Activated naive CD4-positive, alpha-beta T cell treated with anti-CD3 and anti-CD28 coated beads, Interleukin-2, amount 10 ng/mL, durations not matched to agents 7 days and 5 days (primary cell): ENCODE measurements at regions of chr17 and their contacts with region 1.

Region 1: DNA sequence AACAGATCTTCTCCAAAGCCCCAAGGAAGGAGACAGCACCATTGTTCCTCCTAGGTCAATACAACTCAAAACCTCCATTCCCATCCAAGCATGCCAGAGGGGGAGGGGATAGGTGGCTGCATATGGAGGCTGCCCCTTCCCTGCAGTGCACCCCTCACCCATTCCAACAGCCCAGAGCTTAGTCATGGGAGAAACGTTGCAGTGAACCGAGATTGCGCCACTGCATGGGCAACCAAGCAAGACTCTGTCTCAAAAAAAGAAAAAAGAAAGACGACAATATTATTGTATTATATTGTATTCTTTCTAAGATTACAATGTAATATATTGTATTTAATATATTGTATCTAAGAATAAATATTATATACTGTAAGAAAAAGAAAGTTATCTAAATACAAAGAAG is 36.4 kb upstream of the CD300E start:
- DNase-seq: no peak
- H3K4me3 Mint-ChIP-seq: no peak overlapping the region
- H3K27ac Mint-ChIP-seq: no peak overlapping the region
- H3K4me1 Mint-ChIP-seq: peaks cover 6% of the 10 kb centered on the region
- H3K27me3 Mint-ChIP-seq: peaks cover 80% of the 10 kb centered on the region

Region 2: DNA sequence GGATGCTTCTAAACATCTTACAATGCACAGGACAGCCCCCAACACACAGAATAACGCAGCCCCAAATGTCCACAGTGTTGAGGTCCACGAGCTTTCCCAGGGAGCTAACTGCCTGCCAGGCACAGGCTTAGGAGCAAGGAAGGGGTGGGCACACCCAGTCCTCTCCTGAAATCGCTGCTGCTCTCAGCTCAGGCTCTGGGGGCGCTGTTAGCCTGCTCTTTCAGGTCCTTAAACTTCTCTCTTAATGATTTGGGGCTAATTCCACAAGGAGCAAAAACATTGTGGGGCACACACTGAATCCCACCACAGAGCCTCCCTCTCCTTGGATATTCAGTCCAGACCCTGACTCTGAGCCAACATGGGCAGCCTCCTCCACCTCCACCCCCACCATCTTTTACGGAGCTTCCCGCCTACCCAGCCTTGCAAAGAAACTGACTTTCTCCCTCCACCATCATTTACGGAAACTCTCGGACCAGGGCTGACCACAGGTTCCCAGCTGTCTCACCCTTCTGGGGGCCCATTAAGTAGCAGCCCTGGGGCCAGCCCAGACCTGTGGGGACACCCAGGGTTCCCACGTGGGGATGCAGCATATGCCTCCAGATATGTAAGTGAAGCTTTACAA is 93.7 kb before region 1 on chr17:
- CTCF ChIA-PET with region 1: interaction called, 14 read pairs
- DNase-seq: peak; percentile 63
- H3K4me3 Mint-ChIP-seq: no peak overlapping the region
- H3K27ac Mint-ChIP-seq: no peak overlapping the region
- H3K4me1 Mint-ChIP-seq: peaks cover 3% of the 10 kb centered on the region
- H3K27me3 Mint-ChIP-seq: peaks cover 65% of the 10 kb centered on the region

Region 3: GRCh38 chr17:74677558-74678466 is 17.9 kb after region 1 on chr17:
- CTCF ChIA-PET with region 1: interaction called, 20 read pairs
- DNase-seq: peak; percentile 38
- H3K4me3 Mint-ChIP-seq: no peak overlapping the region
- H3K27ac Mint-ChIP-seq: peak overlapping the region; percentile 66
- H3K4me1 Mint-ChIP-seq: peaks cover 23% of the 10 kb centered on the region
- H3K27me3 Mint-ChIP-seq: peaks cover 76% of the 10 kb centered on the region

Region 4: DNA sequence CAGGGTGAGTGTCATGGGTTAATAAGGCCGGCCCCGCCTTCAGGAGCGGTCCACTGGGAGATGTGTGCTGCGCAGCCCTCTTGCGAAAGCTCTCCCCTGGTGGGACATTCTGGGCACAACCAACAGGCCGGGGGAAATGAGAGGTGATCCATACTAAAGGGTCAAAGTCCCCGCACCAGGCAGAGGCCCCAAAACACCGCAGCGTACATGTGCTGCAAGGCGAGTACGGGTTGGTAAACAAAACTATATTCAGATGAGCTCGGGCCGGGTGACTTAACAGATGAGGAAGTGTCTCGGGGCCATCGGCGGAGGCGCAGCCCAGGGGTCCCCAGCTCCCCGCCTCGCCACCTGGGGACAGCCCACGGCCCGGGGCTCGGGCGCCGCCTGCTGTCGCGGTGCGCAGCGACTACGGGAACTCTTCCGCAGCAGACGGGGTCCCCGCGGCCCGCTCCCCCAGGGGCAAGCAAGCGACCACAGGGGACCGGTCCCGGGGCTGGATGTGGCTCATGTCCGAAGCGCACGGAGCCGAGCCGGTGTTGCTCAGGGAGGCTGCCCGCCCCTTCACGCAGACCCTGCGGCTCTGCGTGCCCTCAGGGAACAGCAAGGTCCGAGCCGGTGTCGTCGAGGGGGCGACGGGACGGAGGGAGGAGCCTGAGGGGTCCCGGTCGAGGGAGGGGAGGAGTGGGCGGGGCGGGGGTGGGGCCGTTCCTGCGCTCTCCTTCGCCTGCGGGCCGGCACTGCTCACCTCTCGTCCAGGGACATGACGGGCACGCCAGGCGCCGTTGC is 76.8 kb after region 1 on chr17 and contains the start of gene RAB37:
- CTCF ChIA-PET with region 1: interaction called, 240 read pairs
- DNase-seq: peak; percentile 66
- H3K4me3 Mint-ChIP-seq: peak within 1 kb of the TSS; percentile 92
- H3K27ac Mint-ChIP-seq: peak within 1 kb of the TSS; percentile 96
- H3K4me1 Mint-ChIP-seq: peaks cover 59% of the 10 kb centered on the region
- H3K27me3 Mint-ChIP-seq: peaks cover 6% of the 10 kb centered on the region

Region 5: DNA sequence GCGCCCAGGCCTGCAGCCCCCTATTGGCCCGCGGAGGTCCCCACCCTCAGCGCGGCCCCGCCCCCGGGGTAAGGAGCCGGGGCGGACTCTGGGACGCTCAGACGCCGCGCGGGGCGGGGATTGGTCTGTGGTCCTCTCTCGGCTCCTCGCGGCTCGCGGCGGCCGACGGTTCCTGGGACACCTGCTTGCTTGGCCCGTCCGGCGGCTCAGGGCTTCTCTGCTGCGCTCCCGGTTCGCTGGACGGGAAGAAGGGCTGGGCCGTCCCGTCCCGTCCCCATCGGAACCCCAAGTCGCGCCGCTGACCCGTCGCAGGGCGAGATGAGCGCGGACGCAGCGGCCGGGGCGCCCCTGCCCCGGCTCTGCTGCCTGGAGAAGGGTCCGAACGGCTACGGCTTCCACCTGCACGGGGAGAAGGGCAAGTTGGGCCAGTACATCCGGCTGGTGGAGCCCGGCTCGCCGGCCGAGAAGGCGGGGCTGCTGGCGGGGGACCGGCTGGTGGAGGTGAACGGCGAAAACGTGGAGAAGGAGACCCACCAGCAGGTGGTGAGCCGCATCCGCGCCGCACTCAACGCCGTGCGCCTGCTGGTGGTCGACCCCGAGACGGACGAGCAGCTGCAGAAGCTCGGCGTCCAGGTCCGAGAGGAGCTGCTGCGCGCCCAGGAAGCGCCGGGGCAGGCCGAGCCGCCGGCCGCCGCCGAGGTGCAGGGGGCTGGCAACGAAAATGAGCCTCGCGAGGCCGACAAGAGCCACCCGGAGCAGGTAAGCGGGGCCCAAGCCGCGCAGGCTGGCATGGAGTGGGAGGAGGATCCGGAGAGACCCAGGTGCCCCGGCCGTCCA is 88.8 kb after region 1 on chr17 and contains the start of gene NHERF1:
- CTCF ChIA-PET with region 1: interaction called, 23 read pairs
- DNase-seq: peak; percentile 95
- H3K4me3 Mint-ChIP-seq: peak within 1 kb of the TSS; percentile 99
- H3K27ac Mint-ChIP-seq: peak within 1 kb of the TSS; percentile 88
- H3K4me1 Mint-ChIP-seq: peaks cover 64% of the 10 kb centered on the region
- H3K27me3 Mint-ChIP-seq: no peaks in the 10 kb centered on the region

Region 6: GRCh38 chr17:74770498-74771318 is 110.8 kb after region 1 on chr17:
- CTCF ChIA-PET with region 1: interaction called, 38 read pairs
- DNase-seq: peak; percentile 83
- H3K4me3 Mint-ChIP-seq: no peak overlapping the region
- H3K27ac Mint-ChIP-seq: peak overlapping the region; percentile 80
- H3K4me1 Mint-ChIP-seq: peaks cover 47% of the 10 kb centered on the region
- H3K27me3 Mint-ChIP-seq: no peaks in the 10 kb centered on the region

Region 7: DNA sequence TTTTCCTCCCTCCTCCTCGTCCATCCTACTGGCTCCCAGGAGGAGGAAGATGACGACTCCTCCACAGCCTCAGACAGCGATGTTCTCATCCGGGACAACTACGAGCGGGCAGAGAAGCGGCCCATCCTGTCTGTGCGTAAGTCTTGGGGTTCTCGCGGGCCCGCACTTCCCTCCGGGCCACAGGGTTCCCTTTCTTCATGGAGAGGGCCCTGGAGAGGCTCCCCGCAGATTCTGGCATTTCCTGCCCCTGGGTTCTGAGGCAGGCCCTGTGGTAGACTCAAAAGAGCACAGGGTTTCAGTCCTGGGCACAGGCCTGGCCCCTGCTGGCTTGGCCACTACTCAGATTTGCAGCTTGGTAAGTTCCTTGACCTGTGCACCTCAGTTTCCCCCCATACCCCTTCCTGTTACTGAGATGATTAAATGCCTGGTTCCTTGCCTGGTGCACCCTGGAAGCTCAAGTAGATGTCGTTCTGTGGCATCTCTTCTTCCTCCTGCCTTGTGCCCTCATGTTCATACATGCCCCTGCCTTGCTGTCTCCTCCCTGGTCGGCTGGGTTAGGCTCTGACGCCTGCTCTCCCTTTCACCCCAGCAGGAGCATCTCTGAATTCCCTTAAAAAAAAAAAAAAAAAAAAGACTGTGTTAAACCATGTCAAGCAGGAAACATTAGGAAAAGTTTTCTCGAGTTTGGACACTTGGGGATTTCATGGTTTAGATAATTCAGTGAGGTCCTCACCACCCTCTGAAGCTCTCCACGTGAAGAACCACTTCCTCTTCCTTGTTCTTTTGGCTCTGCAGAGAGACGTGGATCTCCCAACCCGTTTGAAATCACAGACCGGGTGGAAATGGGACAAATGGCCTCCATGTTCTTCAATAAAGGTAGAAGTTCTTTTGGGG is 130.5 kb after region 1 on chr17:
- CTCF ChIA-PET with region 1: interaction called, 21 read pairs
- DNase-seq: peak; percentile 38
- H3K4me3 Mint-ChIP-seq: peak overlapping the region; percentile 35
- H3K27ac Mint-ChIP-seq: peak overlapping the region; percentile 88
- H3K4me1 Mint-ChIP-seq: peaks cover 49% of the 10 kb centered on the region
- H3K27me3 Mint-ChIP-seq: no peaks in the 10 kb centered on the region